ENCODE measurements at regions of chr1 and their contacts with region 1.

Region 1: DNA sequence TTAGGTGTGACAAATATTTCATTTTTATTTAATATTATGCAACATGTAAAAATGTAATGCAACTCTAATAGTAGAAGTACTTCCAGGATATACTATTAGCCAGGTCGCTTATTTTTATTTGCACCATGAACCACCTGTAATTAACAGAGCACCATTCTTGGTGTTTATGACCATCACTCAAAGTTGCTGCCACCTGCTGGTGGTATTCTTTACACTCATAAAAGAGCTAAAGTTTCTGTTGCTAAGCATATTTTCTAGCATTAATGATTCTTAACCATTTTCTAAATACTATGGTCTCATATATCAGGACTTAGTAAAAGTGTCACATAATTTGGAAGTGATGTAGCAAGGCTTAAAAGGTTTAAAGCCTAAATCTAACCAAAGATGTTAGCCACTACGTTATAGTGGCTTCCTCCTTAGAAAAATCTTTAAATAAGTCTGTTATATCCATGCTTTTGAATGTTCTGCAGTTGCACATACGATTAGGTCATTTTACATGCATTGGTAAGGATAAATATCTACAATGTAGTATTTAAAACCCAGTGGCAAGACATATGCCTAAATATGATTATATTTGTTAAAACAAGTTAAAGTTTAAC is 244.5 kb downstream of the NEGR1 start:
- DNase-seq: peak; percentile 33
- H3K4me3 Mint-ChIP-seq: no peak overlapping the region
- H3K27ac Mint-ChIP-seq: no peak overlapping the region
- H3K4me1 Mint-ChIP-seq: no peaks in the 10 kb centered on the region
- H3K27me3 Mint-ChIP-seq: no peaks in the 10 kb centered on the region

Region 2: DNA sequence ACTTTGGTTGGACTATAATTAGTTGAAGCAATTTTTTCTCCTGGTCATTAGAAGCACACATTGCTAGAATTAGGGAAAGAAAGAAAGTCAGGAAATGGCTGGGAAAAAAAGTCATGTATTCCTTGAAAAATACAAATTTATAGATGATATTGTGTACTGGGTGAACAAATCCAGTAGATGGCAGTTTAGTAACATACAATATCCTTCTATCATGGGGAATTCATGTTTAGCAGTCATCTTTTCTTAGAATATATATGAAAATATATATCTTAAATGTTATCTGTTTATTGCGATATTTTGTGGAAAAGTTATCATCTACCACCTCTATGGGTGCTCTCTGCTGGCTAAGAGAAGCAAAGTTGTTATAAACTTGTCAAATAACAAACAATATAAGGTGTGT is 943.9 kb before region 1 on chr1:
- CTCF ChIA-PET with region 1: no interaction called
- intact Hi-C with region 1: loop called (anchors 2 kb)
- DNase-seq: no peak
- H3K4me3 Mint-ChIP-seq: no peak overlapping the region
- H3K27ac Mint-ChIP-seq: no peak overlapping the region
- H3K4me1 Mint-ChIP-seq: no peaks in the 10 kb centered on the region
- H3K27me3 Mint-ChIP-seq: peaks cover 8% of the 10 kb centered on the region

Region 3: DNA sequence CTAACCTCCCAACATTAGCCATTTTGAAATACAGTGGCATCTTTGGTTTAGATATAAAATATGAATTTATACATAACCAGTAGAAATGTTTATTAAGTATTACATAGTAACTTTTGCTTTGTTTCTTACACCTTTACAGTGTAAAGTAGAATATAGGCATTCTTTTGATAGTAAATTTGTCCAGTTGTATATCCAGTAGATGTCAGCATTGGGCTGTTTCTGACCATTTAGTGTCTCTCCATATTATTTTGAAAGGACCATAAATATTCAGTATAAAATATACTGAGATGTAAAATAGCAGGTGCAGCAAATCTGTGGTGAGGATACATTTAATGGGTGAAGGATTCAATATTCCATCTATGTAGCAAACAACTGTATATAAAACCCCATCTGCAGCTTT is 841.2 kb before region 1 on chr1:
- CTCF ChIA-PET with region 1: no interaction called
- intact Hi-C with region 1: loop called (anchors 10 kb)
- DNase-seq: no peak
- H3K4me3 Mint-ChIP-seq: no peak overlapping the region
- H3K27ac Mint-ChIP-seq: no peak overlapping the region
- H3K4me1 Mint-ChIP-seq: no peaks in the 10 kb centered on the region
- H3K27me3 Mint-ChIP-seq: no peaks in the 10 kb centered on the region